ENCODE measurements at regions of chr7 and their contacts with region 1.

Region 1: DNA sequence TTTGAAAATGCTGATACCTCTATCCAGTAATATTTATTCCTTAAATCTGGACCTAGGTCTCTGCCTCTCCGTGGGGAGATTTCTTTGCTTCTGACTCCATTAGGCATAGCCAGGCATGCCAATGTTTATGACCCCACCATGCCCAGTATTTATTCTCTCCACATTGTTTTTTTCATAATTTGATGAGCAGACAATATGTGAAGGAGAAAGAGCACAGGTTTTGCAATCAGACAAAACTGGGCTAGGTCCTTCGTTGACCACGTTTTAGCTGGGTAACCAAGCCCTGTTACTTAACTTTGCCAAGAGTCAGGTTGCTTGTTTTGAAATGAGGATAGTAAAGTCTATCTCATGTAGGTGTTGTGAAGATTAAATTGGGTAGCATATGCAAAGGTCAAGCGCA is 21.6 kb upstream of the PRPS1L1 start:
- DNase-seq: no peak
- CTCF ChIP-seq: no peak

Region 2: DNA sequence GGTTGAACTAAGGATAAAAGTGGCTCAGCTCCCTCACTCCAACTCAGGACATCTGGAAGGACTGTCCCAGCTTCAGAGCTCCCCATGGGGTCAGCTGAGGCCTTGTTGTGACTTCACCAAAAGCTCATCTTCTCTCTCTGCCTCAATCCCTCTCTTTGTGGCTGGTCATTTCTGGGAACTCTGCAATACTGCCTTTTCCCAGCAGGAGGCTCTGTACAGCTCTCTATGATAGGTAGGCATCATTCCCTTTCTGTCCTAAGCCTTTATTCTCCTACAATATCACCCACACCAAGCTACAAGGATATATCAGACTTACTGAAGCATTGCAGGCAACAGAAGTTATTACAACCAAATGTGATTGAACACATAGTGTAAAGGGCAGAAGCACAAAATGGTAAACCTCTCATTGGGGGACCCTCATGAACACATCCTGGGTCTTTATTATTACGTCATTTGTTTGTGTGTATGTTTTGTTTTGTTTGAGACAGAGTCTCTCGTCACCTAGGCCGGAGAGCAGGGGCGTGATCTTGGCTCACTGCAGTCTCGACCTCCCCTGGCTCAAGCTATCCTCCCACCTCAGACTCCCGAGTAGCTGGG is 15.1 kb after region 1 on chr7:
- CTCF ChIA-PET with region 1: interaction called, 14 read pairs
- POLR2A ChIA-PET with region 1: no interaction called
- DNase-seq: peak; percentile 20
- CTCF ChIP-seq: peak; percentile 57

Measured in GM10248 (cell line).